ENCODE measurements at regions of chr9 and their contacts with region 1.

Region 1: GRCh38 chr9:107489687-107490605 is at the start of gene KLF4:
- DNase-seq: peak; percentile 94
- H3K4me3 ChIP-seq: peak within 1 kb of the TSS; percentile 61 to 85 (median 80)
- H3K27ac ChIP-seq: peak within 1 kb of the TSS; percentile 92 to 93 (median 92)
- H3K4me1 ChIP-seq: peaks cover 0 to 28% (median 11%) of the 10 kb centered on the region in 4 donors
- H3K27me3 ChIP-seq: no peaks in the 10 kb centered on the region
- CTCF ChIP-seq: no peak
- EP300 ChIP-seq: peak; percentile 74
- POLR2A ChIP-seq: peak; percentile 86
- total RNA-seq, gene KLF4: 304 to 861 (median 407) TPM

Region 2: GRCh38 chr9:107637421-107638420 is 147.8 kb after region 1 on chr9:
- in situ Hi-C with region 1: no loop called
- intact Hi-C with region 1: loop called (anchors 2 kb)
- DNase-seq: peak; percentile 80
- H3K4me3 ChIP-seq: peak overlapping the region; percentile 1 to 53 (median 38)
- H3K27ac ChIP-seq: peak overlapping the region; percentile 84 to 97 (median 92)
- H3K4me1 ChIP-seq: peaks cover 11 to 23% (median 17%) of the 10 kb centered on the region in 4 donors
- H3K27me3 ChIP-seq: no peaks in the 10 kb centered on the region
- CTCF ChIP-seq: peak in 2 of 5 experiments; percentile 21 to 22
- EP300 ChIP-seq: no peak
- POLR2A ChIP-seq: peak; percentile 90

Region 3: DNA sequence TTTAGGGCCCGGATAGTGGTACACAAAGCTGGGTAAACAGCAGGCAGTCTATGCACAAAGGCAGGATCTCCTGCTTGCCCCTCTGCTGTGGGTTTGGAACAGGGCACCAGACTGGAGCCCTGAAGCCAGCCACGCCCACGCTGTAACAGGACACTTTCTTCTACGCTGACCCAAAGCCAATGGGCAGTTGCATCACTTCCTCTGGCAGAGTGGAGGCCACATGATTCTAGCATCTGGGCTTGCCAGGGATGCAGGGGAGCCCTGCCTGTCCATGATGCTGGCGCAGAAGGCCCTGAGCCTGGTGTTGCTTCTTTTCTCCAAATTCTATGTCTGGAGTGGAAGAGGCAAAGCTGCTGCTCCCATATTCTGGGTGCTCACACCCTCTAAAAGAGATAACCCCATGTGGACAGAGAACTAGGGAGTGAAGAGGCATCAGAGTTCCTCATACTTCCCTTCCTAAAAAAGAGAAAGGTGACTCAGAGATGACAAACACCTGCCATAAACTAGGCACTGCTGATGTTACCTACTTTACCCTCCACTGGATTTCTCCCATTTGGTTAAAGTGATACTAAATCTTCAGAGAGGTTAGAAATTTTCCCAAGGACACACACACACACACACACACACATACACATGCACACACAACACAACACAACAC is 260.0 kb after region 1 on chr9:
- in situ Hi-C with region 1: loop called in 1 of 4 experiments (anchors 25 kb)
- intact Hi-C with region 1: loop called (anchors 5 kb)
- DNase-seq: peak; percentile 76
- H3K4me3 ChIP-seq: no peak overlapping the region
- H3K27ac ChIP-seq: peak overlapping the region; percentile 72 to 88 (median 80)
- H3K4me1 ChIP-seq: peaks cover 26 to 44% (median 27%) of the 10 kb centered on the region in 4 donors
- H3K27me3 ChIP-seq: no peaks in the 10 kb centered on the region
- CTCF ChIP-seq: no peak
- EP300 ChIP-seq: no peak
- POLR2A ChIP-seq: no peak

Region 4: DNA sequence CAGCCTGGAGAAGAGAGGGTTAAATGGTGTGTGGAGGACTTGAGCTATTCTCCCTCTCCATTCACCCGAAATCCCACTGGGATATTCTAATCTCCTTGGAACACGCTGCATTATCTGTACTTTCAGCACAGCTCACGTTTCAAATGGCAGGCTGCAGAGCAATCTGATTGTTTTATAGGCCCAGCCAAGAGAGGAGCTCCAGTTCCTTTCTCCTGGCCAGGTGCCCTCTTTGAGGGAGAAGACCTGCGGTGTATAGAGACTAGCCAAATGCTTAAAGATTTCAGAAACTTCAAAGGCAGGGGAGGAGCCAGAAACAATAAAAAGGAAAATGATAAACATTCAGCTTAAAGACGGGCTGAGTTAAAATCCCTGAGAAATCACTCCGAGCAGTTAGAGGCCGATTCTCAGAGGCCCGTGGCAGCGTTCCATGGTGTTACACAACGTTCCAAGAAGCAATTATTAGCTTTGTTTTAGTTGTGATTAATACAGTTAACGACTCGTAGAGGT is 563.7 kb after region 1 on chr9:
- in situ Hi-C with region 1: no loop called
- intact Hi-C with region 1: loop called (anchors 10 kb)
- DNase-seq: peak; percentile 68
- H3K4me3 ChIP-seq: peak overlapping the region in 1 of 4 donors; percentile 1
- H3K27ac ChIP-seq: peak overlapping the region; percentile 26 to 72 (median 55)
- H3K4me1 ChIP-seq: peaks cover 5 to 65% (median 36%) of the 10 kb centered on the region in 4 donors
- H3K27me3 ChIP-seq: no peaks in the 10 kb centered on the region
- CTCF ChIP-seq: no peak
- EP300 ChIP-seq: no peak
- POLR2A ChIP-seq: no peak

Region 5: GRCh38 chr9:108142504-108143201 is 652.7 kb after region 1 on chr9:
- in situ Hi-C with region 1: no loop called
- intact Hi-C with region 1: loop called (anchors 10 kb)
- DNase-seq: peak; percentile 85
- H3K4me3 ChIP-seq: no peak overlapping the region
- H3K27ac ChIP-seq: peak overlapping the region; percentile 69 to 83 (median 76)
- H3K4me1 ChIP-seq: peaks cover 13 to 21% (median 17%) of the 10 kb centered on the region in 4 donors
- H3K27me3 ChIP-seq: no peaks in the 10 kb centered on the region
- CTCF ChIP-seq: peak in 3 of 5 experiments; percentile 5 to 41 (median 29)
- EP300 ChIP-seq: peak; percentile 86
- POLR2A ChIP-seq: no peak

Region 6: DNA sequence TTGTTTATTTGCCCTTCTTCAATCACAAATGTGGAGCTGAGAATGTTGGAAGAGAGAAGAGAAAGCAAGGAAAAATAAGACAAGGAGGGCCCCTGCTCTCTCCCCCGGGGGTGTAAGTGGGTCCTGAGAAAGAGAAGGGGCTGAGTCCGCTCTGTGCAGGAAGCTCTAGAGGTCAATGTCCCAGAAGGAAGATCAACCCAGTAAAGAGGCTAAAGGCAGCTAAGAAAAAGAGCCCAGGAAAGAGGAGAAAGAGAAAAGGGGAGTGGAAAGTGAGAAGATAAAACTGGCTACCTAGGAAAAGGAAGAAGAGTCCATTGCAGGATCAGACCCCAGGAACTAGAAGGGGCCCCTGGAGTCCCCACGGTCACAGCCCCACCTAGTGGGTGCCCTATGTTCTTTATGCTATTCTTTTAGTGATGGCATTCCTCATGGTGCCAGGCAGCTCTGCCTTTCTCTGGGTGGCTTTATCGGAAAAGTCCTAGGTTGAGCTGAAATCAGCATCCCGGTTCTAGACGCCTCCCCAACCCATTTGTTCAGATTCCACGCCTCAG is 782.5 kb after region 1 on chr9:
- in situ Hi-C with region 1: loop called in 1 of 4 experiments (anchors 25 kb)
- intact Hi-C with region 1: no loop called
- DNase-seq: peak; percentile 66
- H3K4me3 ChIP-seq: peak overlapping the region in 3 of 4 donors; percentile 10 to 46 (median 29)
- H3K27ac ChIP-seq: peak overlapping the region; percentile 75 to 90 (median 83)
- H3K4me1 ChIP-seq: peaks cover 7 to 28% (median 22%) of the 10 kb centered on the region in 4 donors
- H3K27me3 ChIP-seq: no peaks in the 10 kb centered on the region
- CTCF ChIP-seq: peak; percentile 52 to 81 (median 60)
- EP300 ChIP-seq: no peak
- POLR2A ChIP-seq: peak; percentile 22

Measured in transverse colon (tissue), 4 donors.